A549 (cell line): ENCODE measurements at regions of chr3 and their contacts with region 1.

Region 1: DNA sequence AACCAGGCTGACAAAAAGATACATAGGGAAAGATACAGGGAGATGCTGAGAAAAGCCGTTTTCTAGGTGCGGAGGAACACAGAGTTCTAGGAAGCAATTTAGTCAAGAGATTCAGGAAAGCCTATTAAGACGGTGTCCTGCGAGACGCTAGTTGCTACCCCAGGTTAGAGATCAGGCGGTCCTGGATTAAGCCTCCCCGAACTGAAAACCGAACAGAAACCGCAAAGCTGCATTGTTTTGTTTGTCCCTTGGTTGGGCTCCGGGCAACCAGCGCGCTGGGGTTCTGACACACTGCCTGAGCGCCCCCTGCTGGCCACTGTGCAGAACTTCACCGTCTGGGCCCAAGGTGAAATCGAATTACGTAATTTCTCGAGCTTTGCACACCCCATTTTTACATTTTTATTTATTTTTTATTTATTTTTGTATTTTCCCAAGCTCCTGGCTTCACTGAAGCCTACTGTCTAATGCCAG is 37.3 kb upstream of the NDUFB4 start:
- DNase-seq: peak; percentile 78 to 84
- ATAC-seq: peak; percentile 58 to 84
- H3K4me3 ChIP-seq: peak overlapping the region; percentile 54
- H3K27ac ChIP-seq: peak overlapping the region; percentile 61 to 76
- H3K4me1 ChIP-seq: peaks cover 12% of the 10 kb centered on the region
- CTCF ChIP-seq: peak; percentile 96
- EP300 ChIP-seq: no peak
- POLR2A ChIP-seq: no peak
- RAD21 ChIP-seq: peak; percentile 90 to 96

Region 2: DNA sequence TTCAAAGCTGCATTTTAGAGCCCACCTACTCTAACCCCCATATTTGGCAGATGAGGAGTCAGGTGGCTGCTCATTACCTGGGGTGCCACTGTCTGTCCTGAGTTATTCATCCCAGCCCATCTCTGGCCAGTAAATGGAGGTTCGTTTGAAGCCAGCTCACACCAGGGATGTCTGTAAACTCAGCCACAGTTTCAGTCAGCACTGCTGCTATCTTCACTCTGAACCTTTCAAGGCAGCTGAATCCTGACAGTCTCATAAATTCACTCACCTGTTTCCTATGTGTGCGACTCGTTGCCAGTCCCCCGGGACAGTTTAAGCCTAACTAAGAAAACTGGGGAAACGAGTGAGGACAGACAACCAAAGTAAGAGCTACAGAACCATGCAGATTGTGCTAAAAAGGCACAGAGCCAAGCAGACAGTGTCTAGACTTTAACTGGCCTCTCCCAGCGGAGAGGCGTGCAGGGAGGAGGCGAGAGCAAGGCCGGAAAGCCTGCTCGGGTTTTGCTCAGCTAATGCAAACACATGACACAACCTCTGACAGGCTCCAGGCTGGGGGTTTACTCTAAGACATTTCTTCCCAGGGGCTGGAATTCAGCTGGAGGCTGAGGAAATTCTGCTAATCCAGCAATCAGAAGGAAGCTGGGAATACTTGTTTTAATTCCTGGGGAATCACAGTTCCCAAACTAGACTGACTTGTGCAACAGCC is 120.0 kb before region 1 on chr3:
- CTCF ChIA-PET with region 1: interaction called, 37 read pairs
- POLR2A ChIA-PET with region 1: no interaction called
- DNase-seq: peak in 1 of 2 experiments; percentile 58
- ATAC-seq: peak; percentile 69 to 81; a peak in 5 of 6 replicates
- H3K4me3 ChIP-seq: no peak overlapping the region
- H3K27ac ChIP-seq: peak overlapping the region; percentile 78 to 83
- H3K4me1 ChIP-seq: peaks cover 68% of the 10 kb centered on the region
- CTCF ChIP-seq: no peak
- EP300 ChIP-seq: no peak; a peak in 1 of 5 replicates
- POLR2A ChIP-seq: no peak
- RAD21 ChIP-seq: no peak

Region 3: DNA sequence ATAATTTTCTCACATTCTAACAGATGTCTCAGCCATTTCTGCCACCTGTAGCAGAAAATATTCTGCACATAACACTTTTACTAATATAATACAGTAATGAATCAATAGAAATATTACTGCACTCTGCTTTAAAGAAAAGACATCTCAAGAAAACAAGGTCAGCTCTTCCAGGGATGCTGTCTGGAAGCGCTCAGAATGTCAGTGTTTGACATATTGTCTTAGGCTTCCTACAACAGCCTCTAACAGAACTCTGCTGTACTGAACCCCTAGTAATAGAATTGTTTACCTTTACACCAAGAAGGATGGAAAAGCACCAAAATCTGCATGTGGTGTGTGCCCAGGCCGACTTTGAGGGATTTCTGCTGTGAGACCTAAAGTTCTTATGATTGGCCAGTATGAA is 46.2 kb before region 1 on chr3:
- CTCF ChIA-PET with region 1: interaction called, 12 read pairs
- POLR2A ChIA-PET with region 1: interaction called, 3 read pairs
- DNase-seq: no peak
- ATAC-seq: no peak
- H3K4me3 ChIP-seq: no peak overlapping the region
- H3K27ac ChIP-seq: no peak overlapping the region
- H3K4me1 ChIP-seq: no peaks in the 10 kb centered on the region
- CTCF ChIP-seq: no peak
- EP300 ChIP-seq: no peak
- POLR2A ChIP-seq: no peak
- RAD21 ChIP-seq: no peak

Region 4: GRCh38 chr3:120544361-120544760 is 14.4 kb before region 1 on chr3:
- CTCF ChIA-PET with region 1: interaction called, 73 read pairs
- POLR2A ChIA-PET with region 1: no interaction called
- DNase-seq: no peak
- ATAC-seq: no peak
- H3K4me3 ChIP-seq: no peak overlapping the region
- H3K27ac ChIP-seq: no peak overlapping the region
- H3K4me1 ChIP-seq: no peaks in the 10 kb centered on the region
- CTCF ChIP-seq: no peak
- EP300 ChIP-seq: no peak
- POLR2A ChIP-seq: no peak
- RAD21 ChIP-seq: no peak